ENCODE measurements at regions of chr9 and their contacts with region 1.

Region 1: DNA sequence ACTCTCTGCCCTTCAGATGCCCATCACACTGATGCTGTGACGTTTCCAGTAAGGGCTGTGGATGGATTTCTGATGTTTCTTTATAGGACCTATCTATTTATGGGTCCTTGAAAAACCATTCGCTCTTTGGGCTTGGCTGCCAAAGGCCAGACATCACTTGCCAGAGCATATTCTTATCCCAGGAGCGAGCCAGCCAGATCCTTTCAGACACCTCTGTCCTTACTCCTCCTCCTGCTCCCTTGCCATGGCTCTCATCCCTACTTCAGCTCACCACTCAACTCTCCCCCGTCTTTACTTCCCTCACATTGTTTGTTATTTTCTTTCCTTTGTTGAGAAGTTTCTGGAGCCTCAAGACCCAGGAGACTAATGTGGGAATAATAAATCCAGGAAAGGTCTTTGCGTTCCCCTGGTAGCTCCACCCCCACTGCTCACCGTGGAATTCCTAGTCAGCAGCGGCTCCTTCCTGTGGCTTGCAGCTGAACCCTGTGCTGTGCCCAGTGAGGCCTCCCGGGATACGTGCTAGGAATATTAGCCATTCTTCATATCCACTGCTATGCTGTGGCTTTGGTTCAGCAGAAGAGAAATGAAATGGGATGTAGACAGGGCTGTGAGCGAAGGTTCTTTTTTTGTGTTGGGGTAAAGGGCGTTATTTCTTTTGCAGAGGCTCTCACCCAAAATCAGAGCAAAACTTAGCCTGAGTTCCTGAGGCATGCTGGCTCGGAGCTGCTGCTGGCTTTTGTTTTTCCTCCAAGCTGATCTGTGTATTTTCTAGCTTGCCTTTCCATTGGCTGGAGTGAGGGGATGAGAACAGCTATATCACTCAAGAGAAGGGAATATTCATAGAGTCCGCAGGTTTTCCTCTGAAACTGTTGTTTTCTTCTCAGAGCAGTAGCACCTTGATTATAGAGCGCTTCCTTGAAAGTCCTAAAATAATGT is 171.1 kb downstream of the SAXO1 start:
- DNase-seq: peak in 4 of 5 donors; percentile 41 to 58 (median 49)
- ATAC-seq: peak; percentile 72 to 92 (median 87)
- H3K4me3 ChIP-seq: peak overlapping the region in 2 of 12 donors; percentile 0
- H3K27ac ChIP-seq: peak overlapping the region in 6 of 12 donors; percentile 7 to 62 (median 30)
- H3K4me1 ChIP-seq: peaks cover 0 to 26% (median 14%) of the 10 kb centered on the region in 12 donors
- H3K27me3 ChIP-seq: no peaks in the 10 kb centered on the region
- CTCF ChIP-seq: peak in 6 of 12 donors; percentile 8 to 50 (median 20)
- POLR2A ChIP-seq: no peak

Region 2: DNA sequence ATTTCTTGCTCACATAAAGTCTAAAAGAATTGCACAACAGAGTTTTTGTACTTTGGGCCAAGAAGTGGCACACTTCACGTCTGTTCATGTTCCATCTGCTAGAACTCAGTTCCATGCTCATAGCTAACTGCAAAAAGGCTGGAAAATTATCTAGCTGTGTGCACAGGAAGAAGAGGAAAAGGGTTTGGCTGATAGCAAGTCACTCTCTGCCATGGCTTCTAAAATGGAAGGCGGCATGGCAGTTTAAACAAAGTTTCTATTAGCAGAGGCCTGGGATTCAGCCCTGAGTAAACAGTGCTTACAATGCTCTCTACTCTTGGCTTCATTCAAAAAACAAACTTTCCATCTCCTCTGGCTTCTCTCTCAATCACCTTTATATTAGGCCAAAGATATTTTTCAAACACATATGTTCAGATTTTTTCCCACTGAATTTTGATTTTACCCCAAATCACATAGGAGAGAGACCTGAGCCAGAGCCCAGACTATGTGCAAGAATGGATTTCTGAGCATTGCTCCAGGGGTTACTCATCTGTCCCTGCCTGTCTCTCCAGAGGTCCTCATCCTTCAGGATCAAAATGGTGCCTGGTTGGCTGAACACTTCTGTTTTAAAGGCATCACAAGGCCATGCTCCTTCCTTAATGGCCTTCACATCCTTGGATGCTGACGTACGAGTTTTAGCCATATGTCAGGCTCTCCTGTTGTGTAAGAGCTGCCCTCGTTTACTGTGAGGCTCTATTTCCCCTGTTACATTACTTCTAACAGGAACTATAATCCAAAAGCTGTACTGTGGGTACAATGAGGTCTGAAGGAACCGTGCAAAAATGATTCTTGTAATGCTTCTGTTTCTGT is 55.4 kb before region 1 on chr9:
- intact Hi-C with region 1: loop called in 1 of 10 experiments (anchors 10 kb)
- DNase-seq: no peak
- ATAC-seq: peak in 1 of 4 donors; percentile 16
- H3K4me3 ChIP-seq: no peak overlapping the region
- H3K27ac ChIP-seq: no peak overlapping the region
- H3K4me1 ChIP-seq: no peaks in the 10 kb centered on the region
- H3K27me3 ChIP-seq: no peaks in the 10 kb centered on the region
- CTCF ChIP-seq: no peak
- POLR2A ChIP-seq: no peak

Region 3: DNA sequence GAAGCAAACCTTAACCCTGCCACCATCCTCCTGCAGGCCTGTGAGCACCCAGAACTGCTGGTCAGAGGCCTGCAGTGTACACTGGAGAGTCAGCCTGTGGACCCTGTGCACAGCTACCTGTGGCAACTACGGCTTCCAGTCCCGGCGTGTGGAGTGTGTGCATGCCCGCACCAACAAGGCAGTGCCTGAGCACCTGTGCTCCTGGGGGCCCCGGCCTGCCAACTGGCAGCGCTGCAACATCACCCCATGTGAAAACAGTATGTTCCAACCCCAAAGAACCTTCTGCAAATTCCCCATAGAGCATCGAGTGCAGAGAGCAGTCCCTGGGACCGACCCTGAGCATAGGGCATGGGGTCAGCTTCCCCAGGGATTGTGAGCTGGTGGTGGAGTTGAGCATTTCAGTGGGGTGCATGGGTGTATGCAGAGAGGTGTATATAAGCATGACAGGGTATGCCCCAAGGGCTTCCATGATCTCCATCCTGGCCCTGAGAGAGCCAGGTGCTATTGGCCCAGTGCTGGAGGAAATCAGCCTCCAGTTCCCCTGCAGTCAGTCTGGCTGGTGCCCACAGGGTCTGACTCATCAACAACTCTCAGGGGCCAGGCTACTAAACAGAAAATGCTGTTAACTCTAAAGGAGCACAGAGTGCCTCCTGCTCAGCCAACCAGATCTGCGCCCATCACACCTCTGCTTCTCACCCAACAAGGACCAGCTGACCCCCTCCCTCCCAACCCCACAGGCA is 44.9 kb after region 1 on chr9:
- intact Hi-C with region 1: no loop called
- DNase-seq: no peak
- ATAC-seq: peak in 1 of 4 donors; percentile 29
- H3K4me3 ChIP-seq: no peak overlapping the region
- H3K27ac ChIP-seq: no peak overlapping the region
- H3K4me1 ChIP-seq: no peaks in the 10 kb centered on the region
- H3K27me3 ChIP-seq: no peaks in the 10 kb centered on the region
- CTCF ChIP-seq: no peak
- POLR2A ChIP-seq: no peak

Region 4: GRCh38 chr9:18920141-18921084 is 58.5 kb after region 1 on chr9:
- intact Hi-C with region 1: loop called in 1 of 10 experiments (anchors 10 kb)
- DNase-seq: no peak
- ATAC-seq: no peak
- H3K4me3 ChIP-seq: no peak overlapping the region
- H3K27ac ChIP-seq: no peak overlapping the region
- H3K4me1 ChIP-seq: peaks cover 0 to 23% (median 4%) of the 10 kb centered on the region in 12 donors
- H3K27me3 ChIP-seq: no peaks in the 10 kb centered on the region
- CTCF ChIP-seq: no peak
- POLR2A ChIP-seq: no peak

Region 5: GRCh38 chr9:18976709-18977531 is 115.0 kb after region 1 on chr9:
- intact Hi-C with region 1: loop called in 1 of 10 experiments (anchors 10 kb)
- DNase-seq: no peak
- ATAC-seq: no peak
- H3K4me3 ChIP-seq: peak overlapping the region in 6 of 12 donors; percentile 1 to 23 (median 13)
- H3K27ac ChIP-seq: no peak overlapping the region
- H3K4me1 ChIP-seq: peaks cover 0 to 30% (median 4%) of the 10 kb centered on the region in 12 donors
- H3K27me3 ChIP-seq: no peaks in the 10 kb centered on the region
- CTCF ChIP-seq: no peak
- POLR2A ChIP-seq: no peak

Measured in heart left ventricle (tissue), 16 donors.